ENCODE measurements at regions of chr11 and their contacts with region 1.

Region 1: GRCh38 chr11:94519478-94520084 is 7.3 kb downstream of the C11orf97 start:
- DNase-seq: peak in 4 of 14 experiments; percentile 24 to 61 (median 50)
- ATAC-seq: peak; percentile 44
- H3K4me3 ChIP-seq: no peak overlapping the region
- H3K4me3 Mint-ChIP-seq: no peak overlapping the region
- H3K27ac ChIP-seq: no peak overlapping the region
- H3K27ac Mint-ChIP-seq: no peak overlapping the region
- H3K4me1 ChIP-seq: no peaks in the 10 kb centered on the region
- H3K4me1 Mint-ChIP-seq: no peaks in the 10 kb centered on the region
- H3K27me3 ChIP-seq: peaks cover 3 to 8% of the 10 kb centered on the region in 2 experiments
- H3K27me3 Mint-ChIP-seq: peaks cover 31% of the 10 kb centered on the region
- CTCF ChIP-seq: peak; percentile 86

Region 2: DNA sequence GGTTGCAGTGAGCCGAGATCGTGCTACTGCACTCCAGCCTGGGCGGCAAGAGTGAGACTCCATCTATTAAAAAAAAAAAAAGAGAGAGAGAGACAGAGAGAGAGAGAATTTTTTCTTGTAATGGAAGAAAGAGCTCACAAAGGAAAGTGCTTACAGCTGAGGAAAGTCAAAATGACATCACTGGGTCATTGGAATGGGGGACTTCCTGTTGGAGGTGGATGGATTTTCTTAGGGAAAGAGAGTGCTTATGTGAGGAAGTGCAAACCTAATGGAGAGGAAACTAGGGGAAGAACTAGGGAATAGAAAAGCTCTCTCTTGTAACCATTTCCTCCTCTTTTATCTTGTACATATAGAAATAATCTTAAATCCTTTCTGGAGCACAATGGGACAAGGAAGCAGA is 41.3 kb after region 1 on chr11:
- CTCF ChIA-PET with region 1: no interaction called
- POLR2A ChIA-PET with region 1: interaction called, 3 read pairs
- intact Hi-C with region 1: loop called in 1 of 2 experiments (anchors 1 kb)
- DNase-seq: no peak
- ATAC-seq: no peak
- H3K4me3 ChIP-seq: no peak overlapping the region
- H3K4me3 Mint-ChIP-seq: no peak overlapping the region
- H3K27ac ChIP-seq: no peak overlapping the region
- H3K27ac Mint-ChIP-seq: no peak overlapping the region
- H3K4me1 ChIP-seq: no peaks in the 10 kb centered on the region
- H3K4me1 Mint-ChIP-seq: no peaks in the 10 kb centered on the region
- H3K27me3 ChIP-seq: no peaks in the 10 kb centered on the region
- H3K27me3 Mint-ChIP-seq: no peaks in the 10 kb centered on the region
- CTCF ChIP-seq: no peak

Region 3: DNA sequence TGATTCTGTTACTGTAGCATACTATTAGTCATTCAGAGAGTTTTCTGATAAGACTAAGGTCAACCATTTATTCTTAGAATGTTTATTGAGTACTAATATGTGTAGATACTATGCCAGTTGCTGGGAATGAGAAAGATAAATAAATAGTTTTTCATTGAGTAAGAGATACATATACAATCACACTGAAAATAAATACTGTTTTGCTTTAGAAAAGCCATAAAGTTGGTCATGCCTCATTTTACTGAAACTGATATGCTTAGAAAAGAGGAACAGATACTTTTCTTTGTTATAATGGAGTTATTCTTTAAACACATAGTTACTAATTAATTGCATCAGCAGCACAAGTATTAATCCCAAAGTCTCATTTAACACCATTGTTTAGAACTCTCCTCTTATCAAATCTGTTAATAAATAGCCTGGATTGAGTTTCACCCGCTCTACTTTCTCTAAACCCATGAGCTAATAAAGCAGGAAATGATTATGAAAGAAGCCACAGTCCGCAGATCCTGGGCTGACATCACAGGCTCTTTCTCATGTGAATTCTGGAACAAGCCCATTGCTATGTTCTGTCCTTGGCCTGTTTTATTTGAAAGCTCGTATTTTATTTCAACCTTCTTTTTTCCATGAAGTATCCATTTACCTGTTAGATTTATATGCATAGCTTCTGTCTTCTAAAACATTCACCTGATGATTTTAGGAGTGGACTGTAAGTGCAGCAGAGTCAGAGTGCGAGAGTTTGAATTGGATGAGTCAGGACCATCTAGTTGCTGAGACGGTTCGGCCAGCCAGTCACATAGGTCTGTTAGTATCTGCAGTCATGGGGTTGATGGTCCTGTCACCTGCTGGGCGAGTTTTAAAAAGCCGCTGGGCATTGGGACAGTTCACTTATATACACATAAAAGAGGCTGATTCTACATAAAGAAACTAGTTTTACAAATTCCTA is 83.1 kb after region 1 on chr11:
- CTCF ChIA-PET with region 1: interaction called, 4 read pairs
- POLR2A ChIA-PET with region 1: no interaction called
- intact Hi-C with region 1: loop called (anchors 1 to 2 kb)
- DNase-seq: peak in 10 of 14 experiments; percentile 2 to 76 (median 24)
- ATAC-seq: peak; percentile 51
- H3K4me3 ChIP-seq: no peak overlapping the region
- H3K4me3 Mint-ChIP-seq: no peak overlapping the region
- H3K27ac ChIP-seq: no peak overlapping the region
- H3K27ac Mint-ChIP-seq: no peak overlapping the region
- H3K4me1 ChIP-seq: no peaks in the 10 kb centered on the region
- H3K4me1 Mint-ChIP-seq: no peaks in the 10 kb centered on the region
- H3K27me3 ChIP-seq: no peaks in the 10 kb centered on the region
- H3K27me3 Mint-ChIP-seq: no peaks in the 10 kb centered on the region
- CTCF ChIP-seq: peak; percentile 52

Region 4: DNA sequence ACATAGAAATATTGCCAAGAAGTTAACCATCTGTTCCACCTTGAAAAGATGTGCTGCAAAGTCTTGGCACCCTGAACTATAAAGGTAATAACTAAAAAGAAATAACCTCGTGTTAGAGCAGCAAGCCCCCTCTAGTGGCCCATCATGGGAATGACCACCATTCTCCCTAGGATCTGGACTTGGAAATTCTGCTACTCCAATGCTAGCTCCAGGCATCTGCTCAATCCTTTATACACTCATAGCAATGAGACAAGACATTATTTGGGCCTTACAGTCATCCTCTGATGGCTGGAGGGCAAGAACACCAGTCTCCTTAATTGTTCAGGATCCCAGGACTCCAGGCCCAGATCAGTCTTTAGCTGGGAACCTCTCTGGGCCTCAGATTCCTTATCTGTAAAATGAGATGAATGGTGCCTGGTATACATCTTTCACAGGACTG is 377.8 kb after region 1 on chr11:
- CTCF ChIA-PET with region 1: no interaction called
- POLR2A ChIA-PET with region 1: no interaction called
- intact Hi-C with region 1: loop called in 1 of 2 experiments (anchors 2 kb)
- DNase-seq: peak in 8 of 14 experiments; percentile 13 to 53 (median 22)
- ATAC-seq: no peak
- H3K4me3 ChIP-seq: no peak overlapping the region
- H3K4me3 Mint-ChIP-seq: no peak overlapping the region
- H3K27ac ChIP-seq: no peak overlapping the region
- H3K27ac Mint-ChIP-seq: no peak overlapping the region
- H3K4me1 ChIP-seq: no peaks in the 10 kb centered on the region
- H3K4me1 Mint-ChIP-seq: no peaks in the 10 kb centered on the region
- H3K27me3 ChIP-seq: no peaks in the 10 kb centered on the region
- H3K27me3 Mint-ChIP-seq: no peaks in the 10 kb centered on the region
- CTCF ChIP-seq: peak; percentile 88